ENCODE measurements at regions of chr21 and their contacts with region 1.

Region 1: DNA sequence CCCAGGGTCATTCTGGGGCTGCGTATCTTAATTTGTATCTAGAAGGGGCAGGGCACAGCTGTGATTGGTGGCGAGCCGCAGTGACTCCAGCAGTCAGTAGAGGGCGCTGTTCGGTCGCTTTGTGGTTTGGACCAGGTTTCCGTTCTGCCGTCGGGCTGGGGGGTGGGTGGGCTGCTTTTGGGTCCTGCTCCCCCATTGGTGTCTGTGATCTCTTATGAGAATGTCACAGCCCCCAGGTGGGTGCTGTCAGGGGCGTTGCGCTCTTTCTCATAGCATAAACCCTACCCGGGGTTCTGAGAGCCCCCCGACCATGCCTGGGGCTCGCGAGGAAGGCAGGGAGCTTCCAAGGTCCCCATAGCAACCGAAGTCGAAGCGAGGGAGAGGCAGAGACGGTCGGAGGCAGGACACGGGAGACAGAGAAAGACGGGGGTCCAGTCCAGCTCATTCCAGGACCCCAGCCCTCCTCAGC is 5.4 kb downstream of the TFF3 start:
- DNase-seq: peak; percentile 11 to 33
- ATAC-seq: peak; percentile 48 to 85; a peak in 4 of 6 replicates
- H3K4me3 ChIP-seq: no peak overlapping the region
- H3K27ac ChIP-seq: no peak overlapping the region
- H3K4me1 ChIP-seq: no peaks in the 10 kb centered on the region
- CTCF ChIP-seq: peak; percentile 52
- EP300 ChIP-seq: no peak
- POLR2A ChIP-seq: no peak
- RAD21 ChIP-seq: peak; percentile 62 to 65

Region 2: GRCh38 chr21:42164064-42164789 is 145.6 kb before region 1 on chr21:
- CTCF ChIA-PET with region 1: no interaction called
- POLR2A ChIA-PET with region 1: no interaction called
- DNase-seq: peak in 1 of 2 experiments; percentile 24
- ATAC-seq: peak; percentile 81 to 85; a peak in 5 of 6 replicates
- H3K4me3 ChIP-seq: no peak overlapping the region
- H3K27ac ChIP-seq: no peak overlapping the region
- H3K4me1 ChIP-seq: no peaks in the 10 kb centered on the region
- CTCF ChIP-seq: peak; percentile 42
- EP300 ChIP-seq: no peak
- POLR2A ChIP-seq: no peak
- RAD21 ChIP-seq: peak; percentile 60 to 68

Region 3: GRCh38 chr21:42299324-42300044 is 10.3 kb before region 1 on chr21:
- CTCF ChIA-PET with region 1: interaction called, 15 read pairs
- POLR2A ChIA-PET with region 1: no interaction called
- DNase-seq: no peak
- ATAC-seq: no peak
- H3K4me3 ChIP-seq: no peak overlapping the region
- H3K27ac ChIP-seq: no peak overlapping the region
- H3K4me1 ChIP-seq: no peaks in the 10 kb centered on the region
- CTCF ChIP-seq: no peak
- EP300 ChIP-seq: no peak
- POLR2A ChIP-seq: no peak
- RAD21 ChIP-seq: no peak